Endothelial cell of umbilical vein (primary cell): ENCODE measurements at regions of chr1 and their contacts with region 1.

Region 1: DNA sequence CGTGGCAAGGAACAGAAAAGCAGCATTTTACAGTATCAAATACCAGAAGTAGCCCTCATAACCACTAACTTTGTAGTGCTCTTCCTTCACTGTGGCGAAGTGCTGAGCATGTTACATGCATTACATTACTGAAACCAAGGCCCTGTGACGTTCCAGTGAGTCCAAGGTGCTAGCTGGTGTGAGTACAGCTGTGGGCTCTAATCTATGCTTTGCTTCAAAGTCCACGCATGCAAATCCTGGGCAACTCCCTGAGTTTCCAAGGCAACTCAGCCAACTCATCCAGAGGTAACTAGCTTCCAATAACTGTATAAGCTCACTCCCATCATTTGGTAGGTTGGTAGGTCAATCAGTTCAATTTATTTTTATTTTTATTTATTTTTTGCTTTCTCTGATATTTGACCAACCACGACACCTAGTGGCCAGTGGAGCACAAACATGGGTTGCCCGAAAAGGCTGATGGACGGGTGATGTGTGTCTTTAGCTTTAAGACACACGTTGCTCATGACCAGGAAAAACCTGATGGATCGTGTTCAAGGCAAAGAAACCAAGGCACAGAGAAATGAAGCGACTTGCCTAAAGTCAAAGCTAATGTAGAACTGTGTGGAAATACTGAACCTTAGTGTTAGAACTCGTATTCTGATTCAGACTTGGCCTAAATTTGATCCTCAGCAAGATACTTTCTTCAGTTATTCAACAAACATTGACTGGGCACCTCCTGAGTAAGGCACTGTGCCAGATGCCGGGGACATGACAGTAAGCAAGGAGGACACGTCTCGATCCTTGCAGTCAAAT is 73.0 kb downstream of the GNG12 start:
- DNase-seq: peak; percentile 78
- H3K4me3 ChIP-seq: no peak overlapping the region
- H3K27ac ChIP-seq: peak overlapping the region; percentile 24
- H3K4me1 ChIP-seq: peaks cover 7% of the 10 kb centered on the region
- H3K27me3 ChIP-seq: no peaks in the 10 kb centered on the region
- CTCF ChIP-seq: peak; percentile 67 to 85
- POLR2A ChIP-seq: no peak

Region 2: GRCh38 chr1:67535474-67535873 is 224.8 kb before region 1 on chr1:
- CTCF ChIA-PET with region 1: interaction called, 392 read pairs
- POLR2A ChIA-PET with region 1: interaction called, 8 read pairs
- dilution Hi-C with region 1: loop called (anchors 25 kb)
- intact Hi-C with region 1: loop called (anchors 1 kb)
- DNase-seq: peak; percentile 92
- H3K4me3 ChIP-seq: no peak overlapping the region
- H3K27ac ChIP-seq: no peak overlapping the region
- H3K4me1 ChIP-seq: peaks cover 10% of the 10 kb centered on the region
- H3K27me3 ChIP-seq: no peaks in the 10 kb centered on the region
- CTCF ChIP-seq: peak; percentile 93 to 94
- POLR2A ChIP-seq: no peak

Region 3: GRCh38 chr1:67561704-67562113 is 198.5 kb before region 1 on chr1:
- CTCF ChIA-PET with region 1: interaction called, 131 read pairs
- POLR2A ChIA-PET with region 1: no interaction called
- dilution Hi-C with region 1: no loop called
- intact Hi-C with region 1: loop called (anchors 1 kb)
- DNase-seq: peak; percentile 92
- H3K4me3 ChIP-seq: no peak overlapping the region
- H3K27ac ChIP-seq: no peak overlapping the region
- H3K4me1 ChIP-seq: peaks cover 11% of the 10 kb centered on the region
- H3K27me3 ChIP-seq: no peaks in the 10 kb centered on the region
- CTCF ChIP-seq: peak; percentile 85
- POLR2A ChIP-seq: no peak

Region 4: GRCh38 chr1:67674260-67675011 is 85.8 kb before region 1 on chr1:
- CTCF ChIA-PET with region 1: interaction called, 12 read pairs
- POLR2A ChIA-PET with region 1: no interaction called
- dilution Hi-C with region 1: no loop called
- intact Hi-C with region 1: no loop called
- DNase-seq: peak; percentile 96
- H3K4me3 ChIP-seq: no peak overlapping the region
- H3K27ac ChIP-seq: peak overlapping the region; percentile 69
- H3K4me1 ChIP-seq: peaks cover 18% of the 10 kb centered on the region
- H3K27me3 ChIP-seq: no peaks in the 10 kb centered on the region
- CTCF ChIP-seq: no peak
- POLR2A ChIP-seq: no peak

Region 5: GRCh38 chr1:67713057-67713846 is 47.0 kb before region 1 on chr1:
- CTCF ChIA-PET with region 1: interaction called, 23 read pairs
- POLR2A ChIA-PET with region 1: no interaction called
- dilution Hi-C with region 1: no loop called
- intact Hi-C with region 1: loop called (anchors 1 kb)
- DNase-seq: peak; percentile 92
- H3K4me3 ChIP-seq: no peak overlapping the region
- H3K27ac ChIP-seq: peak overlapping the region; percentile 64
- H3K4me1 ChIP-seq: peaks cover 45% of the 10 kb centered on the region
- H3K27me3 ChIP-seq: no peaks in the 10 kb centered on the region
- CTCF ChIP-seq: no peak
- POLR2A ChIP-seq: no peak

Region 6: GRCh38 chr1:67741121-67741520 is 19.1 kb before region 1 on chr1:
- CTCF ChIA-PET with region 1: interaction called, 18 read pairs
- POLR2A ChIA-PET with region 1: no interaction called
- dilution Hi-C with region 1: no loop called
- intact Hi-C with region 1: no loop called
- DNase-seq: peak; percentile 37
- H3K4me3 ChIP-seq: no peak overlapping the region
- H3K27ac ChIP-seq: no peak overlapping the region
- H3K4me1 ChIP-seq: peaks cover 18% of the 10 kb centered on the region
- H3K27me3 ChIP-seq: no peaks in the 10 kb centered on the region
- CTCF ChIP-seq: no peak
- POLR2A ChIP-seq: no peak